Activated naive CD4-positive, alpha-beta T cell treated with anti-CD3 and anti-CD28 coated beads for 36 hours (primary cell): ENCODE measurements at regions of chr6 and their contacts with region 1.

Region 1: GRCh38 chr6:44265007-44265721 is at the start of gene NFKBIE:
- DNase-seq: peak; percentile 97
- H3K4me3 Mint-ChIP-seq: peak within 1 kb of the TSS; percentile 96
- H3K27ac Mint-ChIP-seq: peak within 1 kb of the TSS; percentile 95
- H3K4me1 Mint-ChIP-seq: peaks cover 55% of the 10 kb centered on the region
- H3K27me3 Mint-ChIP-seq: peaks cover 17% of the 10 kb centered on the region
- total RNA-seq, gene NFKBIE: 9.1 to 9.6 TPM

Region 2: DNA sequence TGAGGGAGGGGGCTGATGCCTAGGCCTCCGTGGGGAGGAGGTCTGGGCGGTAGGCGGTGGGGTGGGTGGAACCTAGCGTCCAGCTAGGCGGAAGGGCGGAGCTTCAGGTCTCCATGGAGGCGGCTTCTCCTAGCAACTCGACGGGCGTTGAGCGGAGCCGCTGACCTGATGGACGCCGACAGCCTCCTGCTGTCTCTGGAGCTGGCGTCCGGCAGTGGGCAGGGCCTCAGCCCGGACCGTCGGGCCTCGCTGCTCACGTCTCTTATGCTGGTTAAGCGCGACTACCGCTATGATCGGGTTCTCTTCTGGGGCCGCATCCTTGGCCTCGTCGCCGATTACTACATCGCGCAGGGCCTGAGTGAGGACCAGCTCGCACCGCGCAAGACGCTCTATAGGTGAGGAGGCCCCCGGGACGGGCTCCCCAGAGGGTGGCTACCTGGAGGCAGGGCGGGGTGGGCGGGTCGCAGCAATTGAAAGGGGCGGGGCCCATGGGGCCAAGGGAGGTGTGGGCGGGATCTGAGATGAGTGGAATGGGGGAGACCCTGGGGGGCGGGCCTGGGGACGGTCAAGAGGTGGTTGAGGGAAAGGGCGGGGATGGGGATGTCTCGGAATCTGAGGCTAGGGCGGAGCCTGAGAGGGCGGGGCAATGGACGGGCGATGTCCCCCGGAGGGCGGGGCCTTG is 620.1 kb before region 1 on chr6 and contains the start of gene RSPH9:
- CTCF ChIA-PET with region 1: no interaction called
- intact Hi-C with region 1: no loop called
- DNase-seq: peak; percentile 82
- H3K4me3 Mint-ChIP-seq: peak within 1 kb of the TSS; percentile 75
- H3K27ac Mint-ChIP-seq: no peak within 1 kb of the TSS
- H3K4me1 Mint-ChIP-seq: peaks cover 11% of the 10 kb centered on the region
- H3K27me3 Mint-ChIP-seq: no peaks in the 10 kb centered on the region
- total RNA-seq, gene RSPH9: not detected

Region 3: GRCh38 chr6:43774776-43775534 is 490.2 kb before region 1 on chr6:
- CTCF ChIA-PET with region 1: no interaction called
- intact Hi-C with region 1: loop called (anchors 1 kb)
- DNase-seq: peak; percentile 73
- H3K4me3 Mint-ChIP-seq: peak overlapping the region; percentile 18
- H3K27ac Mint-ChIP-seq: no peak overlapping the region
- H3K4me1 Mint-ChIP-seq: peaks cover 29% of the 10 kb centered on the region
- H3K27me3 Mint-ChIP-seq: no peaks in the 10 kb centered on the region

Region 4: DNA sequence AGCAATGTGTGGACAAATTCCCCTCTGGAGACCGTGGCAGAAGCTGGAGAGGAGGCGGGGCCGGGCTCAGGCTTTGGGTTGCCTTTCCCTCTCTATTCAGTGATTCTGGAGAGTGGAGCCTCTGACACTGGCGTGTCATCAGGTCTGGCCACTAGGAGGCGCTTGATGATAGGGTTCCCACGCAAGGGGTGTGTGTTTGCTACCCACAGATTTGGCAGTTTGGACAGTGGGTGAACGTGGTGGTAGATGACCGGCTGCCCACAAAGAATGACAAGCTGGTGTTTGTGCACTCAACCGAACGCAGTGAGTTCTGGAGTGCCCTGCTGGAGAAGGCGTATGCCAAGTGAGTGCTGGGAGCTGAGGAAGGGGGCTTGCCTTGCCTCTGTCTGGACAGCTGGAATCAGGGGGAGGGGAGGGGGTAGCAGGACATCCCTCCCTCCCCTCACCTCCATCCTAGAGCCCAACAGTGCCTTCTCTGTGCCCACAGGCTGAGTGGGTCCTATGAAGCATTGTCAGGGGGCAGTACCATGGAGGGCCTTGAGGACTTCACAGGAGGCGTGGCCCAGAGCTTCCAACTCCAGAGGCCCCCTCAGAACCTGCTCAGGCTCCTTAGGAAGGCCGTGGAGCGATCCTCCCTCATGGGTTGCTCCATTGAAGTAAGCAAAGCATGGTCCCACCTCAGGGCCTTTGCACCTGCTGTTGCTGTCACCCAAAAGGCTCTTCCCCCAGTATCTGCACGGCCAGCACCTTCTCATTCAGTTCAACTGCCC is 92.2 kb before region 1 on chr6:
- CTCF ChIA-PET with region 1: interaction called, 8 read pairs
- intact Hi-C with region 1: loop called (anchors 1 kb)
- DNase-seq: peak; percentile 89
- H3K4me3 Mint-ChIP-seq: no peak overlapping the region
- H3K27ac Mint-ChIP-seq: no peak overlapping the region
- H3K4me1 Mint-ChIP-seq: peaks cover 4% of the 10 kb centered on the region
- H3K27me3 Mint-ChIP-seq: peaks cover 6% of the 10 kb centered on the region

Region 5: GRCh38 chr6:44278774-44279697 is 13.9 kb after region 1 on chr6:
- CTCF ChIA-PET with region 1: interaction called, 20 read pairs
- intact Hi-C with region 1: no loop called
- DNase-seq: no peak
- H3K4me3 Mint-ChIP-seq: no peak overlapping the region
- H3K27ac Mint-ChIP-seq: no peak overlapping the region
- H3K4me1 Mint-ChIP-seq: no peaks in the 10 kb centered on the region
- H3K27me3 Mint-ChIP-seq: peaks cover 46% of the 10 kb centered on the region

Region 6: GRCh38 chr6:44304282-44305199 is 39.4 kb after region 1 on chr6:
- CTCF ChIA-PET with region 1: interaction called, 108 read pairs
- intact Hi-C with region 1: loop called (anchors 1 kb)
- DNase-seq: peak; percentile 34
- H3K4me3 Mint-ChIP-seq: no peak overlapping the region
- H3K27ac Mint-ChIP-seq: no peak overlapping the region
- H3K4me1 Mint-ChIP-seq: no peaks in the 10 kb centered on the region
- H3K27me3 Mint-ChIP-seq: no peaks in the 10 kb centered on the region

Region 7: DNA sequence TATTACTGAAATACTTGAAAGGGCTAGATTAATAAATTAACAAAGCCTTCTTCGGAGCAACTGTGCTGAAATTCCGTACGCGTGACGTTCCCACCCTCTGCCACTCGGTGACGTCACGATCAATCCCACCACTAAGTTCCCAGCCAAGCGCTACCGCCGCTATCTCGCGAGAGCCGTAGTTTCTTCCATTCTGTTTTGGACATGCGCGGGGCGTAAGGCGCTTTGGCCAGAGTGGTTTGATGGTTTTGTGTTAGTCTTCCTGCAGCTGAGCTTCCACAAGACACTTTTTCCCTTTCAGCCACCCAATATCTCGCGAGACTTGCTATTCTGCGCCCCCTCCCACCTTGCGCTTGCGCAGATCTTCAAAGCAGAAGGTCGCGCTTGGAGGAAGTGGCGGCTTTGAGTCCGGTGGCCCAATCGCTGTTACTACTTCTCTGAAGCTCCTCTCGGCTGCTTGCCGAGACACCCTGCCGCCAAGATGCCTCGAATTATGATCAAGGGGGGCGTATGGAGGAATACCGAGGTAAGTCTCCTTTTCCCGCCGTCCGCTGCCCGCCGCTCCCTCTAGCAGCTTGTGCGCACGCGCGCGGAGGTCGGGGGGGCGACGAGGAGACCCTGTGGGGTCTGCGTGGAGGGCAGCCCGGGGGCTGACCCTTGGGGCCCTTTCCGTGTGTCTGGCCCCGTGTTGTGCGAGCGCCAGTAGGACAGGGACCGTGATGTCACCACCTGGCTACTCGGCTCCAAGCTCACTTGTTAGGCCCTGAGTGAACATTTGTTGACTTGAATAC is 122.4 kb after region 1 on chr6 and contains the start of gene CDC5L:
- CTCF ChIA-PET with region 1: interaction called, 3 read pairs
- intact Hi-C with region 1: loop called (anchors 1 kb)
- DNase-seq: peak; percentile 96
- H3K4me3 Mint-ChIP-seq: peak within 1 kb of the TSS; percentile 93
- H3K27ac Mint-ChIP-seq: peak within 1 kb of the TSS; percentile 96
- H3K4me1 Mint-ChIP-seq: peaks cover 34% of the 10 kb centered on the region
- H3K27me3 Mint-ChIP-seq: no peaks in the 10 kb centered on the region
- total RNA-seq, gene CDC5L: 17.9 to 18.8 TPM

Region 8: GRCh38 chr6:44805238-44805846 is 540.2 kb after region 1 on chr6:
- CTCF ChIA-PET with region 1: no interaction called
- intact Hi-C with region 1: no loop called
- DNase-seq: no peak
- H3K4me3 Mint-ChIP-seq: no peak overlapping the region
- H3K27ac Mint-ChIP-seq: no peak overlapping the region
- H3K4me1 Mint-ChIP-seq: peaks cover 8% of the 10 kb centered on the region
- H3K27me3 Mint-ChIP-seq: no peaks in the 10 kb centered on the region